ENCODE measurements at regions of chr2 and their contacts with region 1.

Region 1: GRCh38 chr2:164954954-164955701 is at the start of gene SLC38A11:
- DNase-seq: no peak
- H3K4me3 ChIP-seq: peak within 1 kb of the TSS; percentile 70
- H3K27me3 ChIP-seq: no peaks in the 10 kb centered on the region
- CTCF ChIP-seq: peak; percentile 54
- polyA plus RNA-seq, gene SLC38A11: 59.2 and 89.4 TPM in 2 replicates

Region 2: GRCh38 chr2:164671664-164672396 is 283.3 kb before region 1 on chr2:
- CTCF ChIA-PET with region 1: no interaction called
- POLR2A ChIA-PET with region 1: no interaction called
- DNase-seq: no peak
- H3K4me3 ChIP-seq: no peak overlapping the region
- H3K27me3 ChIP-seq: no peaks in the 10 kb centered on the region
- CTCF ChIP-seq: no peak

Region 3: GRCh38 chr2:164868563-164869419 is 86.3 kb before region 1 on chr2:
- CTCF ChIA-PET with region 1: no interaction called
- POLR2A ChIA-PET with region 1: interaction called, 10 read pairs
- DNase-seq: no peak
- H3K4me3 ChIP-seq: no peak overlapping the region
- H3K27me3 ChIP-seq: no peaks in the 10 kb centered on the region
- CTCF ChIP-seq: no peak

Region 4: GRCh38 chr2:164921213-164921612 is 33.9 kb before region 1 on chr2:
- CTCF ChIA-PET with region 1: interaction called, 3 read pairs
- POLR2A ChIA-PET with region 1: interaction called, 15 read pairs
- DNase-seq: no peak
- H3K4me3 ChIP-seq: no peak overlapping the region
- H3K27me3 ChIP-seq: no peaks in the 10 kb centered on the region
- CTCF ChIP-seq: no peak

Region 5: DNA sequence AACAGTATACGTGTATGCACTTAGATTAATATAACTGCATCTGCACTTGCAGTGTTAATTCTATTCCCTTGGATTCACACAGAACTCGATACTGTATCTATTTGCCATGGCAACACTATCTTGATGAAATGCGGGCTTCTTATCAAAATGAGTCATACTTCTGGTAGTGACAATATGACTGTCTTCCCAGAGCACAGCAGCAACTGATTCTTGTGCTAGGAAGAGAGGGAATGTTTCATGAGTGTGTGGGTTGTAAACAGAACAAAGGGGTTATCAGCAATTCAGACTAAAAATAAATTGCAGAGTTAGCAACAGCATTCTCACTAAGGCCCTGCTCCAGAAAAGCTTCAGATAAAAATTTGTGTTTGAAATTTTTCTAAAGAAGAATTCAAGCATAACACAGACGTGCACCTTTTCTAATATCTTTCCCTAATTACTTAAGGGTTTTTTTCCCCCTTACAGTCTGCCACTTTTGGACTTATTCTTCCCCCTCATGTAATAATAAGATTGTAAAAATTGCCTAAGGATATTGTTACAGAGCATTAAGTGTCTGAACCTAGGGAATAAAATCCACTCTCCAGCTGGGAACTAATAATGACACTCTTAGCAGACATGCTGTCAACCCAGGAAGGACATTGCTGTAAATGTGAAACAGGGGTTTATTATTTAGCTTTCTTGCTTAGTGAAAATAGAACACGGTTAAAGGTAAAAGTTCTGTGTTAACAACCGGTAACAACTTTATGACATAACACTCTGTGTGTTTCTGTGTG is 100.1 kb after region 1 on chr2:
- CTCF ChIA-PET with region 1: no interaction called
- POLR2A ChIA-PET with region 1: no interaction called
- DNase-seq: no peak
- H3K4me3 ChIP-seq: no peak overlapping the region
- H3K27me3 ChIP-seq: no peaks in the 10 kb centered on the region
- CTCF ChIP-seq: no peak